ENCODE measurements at regions of chr11 and their contacts with region 1.

Region 1: GRCh38 chr11:16605894-16606783 is 132.3 kb upstream of the C11orf58 start:
- DNase-seq: no peak
- H3K4me3 ChIP-seq: peak overlapping the region; percentile 58 to 73 (median 66)
- H3K27ac ChIP-seq: peak overlapping the region; percentile 82 to 93 (median 88)
- H3K4me1 ChIP-seq: peaks cover 0 to 60% (median 10%) of the 10 kb centered on the region in 3 donors
- H3K27me3 ChIP-seq: peaks cover 0 to 91% (median 7%) of the 10 kb centered on the region in 4 donors
- CTCF ChIP-seq: peak; percentile 68 to 99 (median 96)
- POLR2A ChIP-seq: peak in 2 of 4 donors; percentile 62 to 75

Region 2: GRCh38 chr11:15819679-15820286 is 786.4 kb before region 1 on chr11:
- intact Hi-C with region 1: loop called (anchors 10 kb)
- DNase-seq: peak; percentile 1
- H3K4me3 ChIP-seq: no peak overlapping the region
- H3K27ac ChIP-seq: no peak overlapping the region
- H3K4me1 ChIP-seq: peaks cover 0 to 25% (median 6%) of the 10 kb centered on the region in 3 donors
- H3K27me3 ChIP-seq: no peaks in the 10 kb centered on the region
- CTCF ChIP-seq: peak; percentile 39 to 87 (median 77)
- POLR2A ChIP-seq: no peak

Measured in esophagus squamous epithelium (tissue), 5 donors.